Activated CD4-positive, alpha-beta T cell treated with anti-CD3 and anti-CD28 coated beads for 36 hours (primary cell): ENCODE measurements at regions of chr19 and their contacts with region 1.

Region 1: GRCh38 chr19:53867225-53868090 is at the start of gene MYADM:
- DNase-seq: peak; percentile 99
- ATAC-seq: peak; percentile 71
- H3K4me3 Mint-ChIP-seq: peak within 1 kb of the TSS; percentile 91
- H3K27ac Mint-ChIP-seq: peak within 1 kb of the TSS; percentile 88
- H3K4me1 Mint-ChIP-seq: peaks cover 32% of the 10 kb centered on the region
- H3K27me3 Mint-ChIP-seq: no peaks in the 10 kb centered on the region
- total RNA-seq, gene MYADM: 46.4 to 54.6 TPM

Region 2: GRCh38 chr19:53394974-53395839 is 472.3 kb before region 1 on chr19 and contains the start of gene ZNF765:
- CTCF ChIA-PET with region 1: no interaction called
- POLR2A ChIA-PET with region 1: no interaction called
- intact Hi-C with region 1: no loop called
- DNase-seq: peak; percentile 98
- ATAC-seq: peak; percentile 99
- H3K4me3 Mint-ChIP-seq: peak within 1 kb of the TSS; percentile 84
- H3K27ac Mint-ChIP-seq: peak within 1 kb of the TSS; percentile 89
- H3K4me1 Mint-ChIP-seq: peaks cover 25% of the 10 kb centered on the region
- H3K27me3 Mint-ChIP-seq: no peaks in the 10 kb centered on the region
- total RNA-seq, gene ZNF765: 10.7 to 10.9 TPM

Region 3: GRCh38 chr19:53553884-53554791 is 313.3 kb before region 1 on chr19:
- CTCF ChIA-PET with region 1: no interaction called
- POLR2A ChIA-PET with region 1: no interaction called
- intact Hi-C with region 1: loop called in 1 of 2 experiments (anchors 5 kb)
- DNase-seq: peak; percentile 96
- ATAC-seq: peak; percentile 92
- H3K4me3 Mint-ChIP-seq: peak overlapping the region; percentile 92
- H3K27ac Mint-ChIP-seq: peak overlapping the region; percentile 99
- H3K4me1 Mint-ChIP-seq: peaks cover 31% of the 10 kb centered on the region
- H3K27me3 Mint-ChIP-seq: no peaks in the 10 kb centered on the region

Region 4: DNA sequence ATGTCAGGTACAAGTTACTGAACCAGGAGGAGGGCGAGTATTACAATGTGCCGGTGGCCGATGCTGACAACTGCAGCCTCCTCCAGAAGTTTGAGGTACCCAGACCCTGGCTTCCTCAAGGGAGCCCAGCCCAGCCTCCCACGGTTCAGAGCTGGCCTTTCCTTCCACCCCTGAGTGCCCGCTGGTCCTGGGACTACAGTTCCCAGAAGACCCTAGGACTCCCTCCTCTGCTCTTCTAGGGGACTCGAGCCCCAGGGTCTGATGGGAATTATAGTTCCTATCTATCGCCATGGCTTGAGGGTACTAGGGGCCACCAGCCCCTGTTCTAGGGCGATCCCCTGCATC is 25.5 kb after region 1 on chr19:
- CTCF ChIA-PET with region 1: no interaction called
- POLR2A ChIA-PET with region 1: no interaction called
- intact Hi-C with region 1: loop called in 1 of 2 experiments (anchors 1 kb)
- DNase-seq: no peak
- ATAC-seq: no peak
- H3K4me3 Mint-ChIP-seq: no peak overlapping the region
- H3K27ac Mint-ChIP-seq: no peak overlapping the region
- H3K4me1 Mint-ChIP-seq: peaks cover 5% of the 10 kb centered on the region
- H3K27me3 Mint-ChIP-seq: peaks cover 27% of the 10 kb centered on the region

Region 5: GRCh38 chr19:54102421-54103169 is 235.1 kb after region 1 on chr19 and contains the start of gene NDUFA3:
- CTCF ChIA-PET with region 1: no interaction called
- POLR2A ChIA-PET with region 1: no interaction called
- intact Hi-C with region 1: loop called in 1 of 2 experiments (anchors 1 kb)
- DNase-seq: peak; percentile 98
- ATAC-seq: peak; percentile 99
- H3K4me3 Mint-ChIP-seq: peak within 1 kb of the TSS; percentile 93
- H3K27ac Mint-ChIP-seq: peak within 1 kb of the TSS; percentile 96
- H3K4me1 Mint-ChIP-seq: peaks cover 16% of the 10 kb centered on the region
- H3K27me3 Mint-ChIP-seq: no peaks in the 10 kb centered on the region
- total RNA-seq, gene NDUFA3: 99.9 to 158 TPM

Region 6: GRCh38 chr19:54137086-54137921 is 269.8 kb after region 1 on chr19 and contains the start of gene CNOT3:
- CTCF ChIA-PET with region 1: interaction called, 3 read pairs
- POLR2A ChIA-PET with region 1: interaction called, 5 read pairs
- intact Hi-C with region 1: loop called (anchors 1 to 2 kb)
- DNase-seq: peak; percentile 99
- ATAC-seq: peak; percentile 86
- H3K4me3 Mint-ChIP-seq: peak within 1 kb of the TSS; percentile 83
- H3K27ac Mint-ChIP-seq: peak within 1 kb of the TSS; percentile 91
- H3K4me1 Mint-ChIP-seq: peaks cover 44% of the 10 kb centered on the region
- H3K27me3 Mint-ChIP-seq: no peaks in the 10 kb centered on the region
- total RNA-seq, gene CNOT3: 61.0 to 93.8 TPM

Region 7: DNA sequence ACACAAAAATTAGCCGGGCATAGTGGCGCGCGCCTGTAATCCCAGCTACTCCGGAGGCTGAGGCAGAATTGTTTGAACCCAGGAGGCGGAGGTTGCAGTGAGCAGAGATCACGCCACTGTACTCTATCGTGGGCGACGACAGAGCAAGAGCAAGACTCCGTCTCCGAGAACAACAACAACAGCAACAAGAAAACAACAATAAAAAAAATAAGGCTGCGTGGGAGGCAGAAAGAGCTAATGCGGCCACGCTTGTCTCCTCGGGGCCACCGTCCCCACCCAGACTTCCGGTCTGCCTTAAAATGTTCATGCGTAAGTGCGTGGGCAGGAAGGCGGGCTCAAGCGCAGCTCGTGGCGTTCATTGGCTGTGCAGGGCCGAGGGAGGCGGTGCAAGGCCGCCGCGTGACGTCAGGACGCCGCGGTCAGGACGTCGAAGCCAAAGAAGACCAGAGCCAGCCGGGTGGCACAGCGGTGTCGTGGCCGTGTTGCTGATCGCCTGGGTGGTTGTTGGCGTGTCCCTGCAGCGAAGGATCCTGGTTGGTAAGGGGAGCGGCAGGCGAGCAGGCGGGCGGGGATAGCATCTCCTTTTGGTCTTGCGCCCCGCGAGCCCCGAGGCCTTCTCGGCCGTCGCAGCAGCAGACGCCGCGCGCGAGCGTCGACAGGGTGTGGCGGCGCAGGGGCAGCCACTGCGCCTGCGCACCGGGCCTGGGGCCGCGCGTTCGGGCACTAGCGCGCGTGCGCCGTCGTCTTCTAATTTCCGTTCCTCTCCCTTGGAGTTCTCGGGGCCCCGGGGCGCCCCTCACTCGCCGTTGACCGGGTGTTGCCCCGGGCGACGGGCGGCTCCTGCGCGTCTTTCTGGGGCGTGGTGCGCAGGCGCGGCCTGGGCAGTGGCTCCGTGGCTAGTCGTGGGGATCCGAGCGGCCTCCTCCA is 581.6 kb after region 1 on chr19 and contains the start of gene LENG8:
- CTCF ChIA-PET with region 1: no interaction called
- POLR2A ChIA-PET with region 1: no interaction called
- intact Hi-C with region 1: loop called in 1 of 2 experiments (anchors 1 kb)
- DNase-seq: peak; percentile 98
- ATAC-seq: peak; percentile 92
- H3K4me3 Mint-ChIP-seq: peak within 1 kb of the TSS; percentile 98
- H3K27ac Mint-ChIP-seq: peak within 1 kb of the TSS; percentile 98
- H3K4me1 Mint-ChIP-seq: peaks cover 36% of the 10 kb centered on the region
- H3K27me3 Mint-ChIP-seq: no peaks in the 10 kb centered on the region
- total RNA-seq, gene LENG8: 156 to 221 TPM

Region 8: DNA sequence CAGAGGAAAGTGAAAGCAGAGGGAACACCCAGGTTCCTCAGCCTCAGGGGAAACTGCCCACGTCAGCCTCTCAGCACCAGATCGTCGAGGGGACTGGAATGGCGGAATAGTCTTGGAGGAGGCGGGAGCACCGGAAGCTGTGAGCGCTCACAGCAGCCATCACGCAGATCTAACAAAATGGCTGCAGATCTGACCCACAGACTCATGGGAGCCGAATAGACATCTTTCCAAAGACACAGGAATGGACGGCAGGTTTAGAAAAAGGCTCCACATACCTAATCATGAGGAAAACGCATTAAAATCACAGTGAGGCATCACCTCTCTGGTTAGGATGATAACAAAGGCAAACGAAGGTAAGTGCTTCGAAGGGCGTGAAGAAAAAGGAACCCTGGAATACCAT is 694.4 kb after region 1 on chr19:
- CTCF ChIA-PET with region 1: no interaction called
- POLR2A ChIA-PET with region 1: no interaction called
- intact Hi-C with region 1: no loop called
- DNase-seq: no peak
- ATAC-seq: no peak
- H3K4me3 Mint-ChIP-seq: no peak overlapping the region
- H3K27ac Mint-ChIP-seq: no peak overlapping the region
- H3K4me1 Mint-ChIP-seq: no peaks in the 10 kb centered on the region
- H3K27me3 Mint-ChIP-seq: peaks cover 14% of the 10 kb centered on the region